SK-N-SH (cell line): ENCODE measurements at regions of chr2 and their contacts with region 1.

Region 1: GRCh38 chr2:174536304-174536703 is 49.5 kb upstream of the GPR155 start:
- DNase-seq: peak; percentile 78
- H3K4me3 ChIP-seq: no peak overlapping the region
- H3K27ac ChIP-seq: peak overlapping the region in 1 of 2 experiments; percentile 82; a peak in 2 of 4 replicates
- H3K4me1 ChIP-seq: peaks cover 0 to 22% of the 10 kb centered on the region in 2 experiments; a peak in 2 of 4 replicates
- H3K27me3 ChIP-seq: no peaks in the 10 kb centered on the region
- CTCF ChIP-seq: no peak
- EP300 ChIP-seq: peak in 1 of 2 experiments; percentile 95; a peak in 2 of 4 replicates
- RAD21 ChIP-seq: no peak; the same call in 1 of the 2 replicates

Region 2: GRCh38 chr2:174546581-174547506 is 10.5 kb after region 1 on chr2:
- CTCF ChIA-PET with region 1: interaction called, 14 read pairs
- POLR2A ChIA-PET with region 1: no interaction called
- DNase-seq: peak; percentile 47
- H3K4me3 ChIP-seq: no peak overlapping the region; a peak in 1 of 4 replicates
- H3K27ac ChIP-seq: no peak overlapping the region
- H3K4me1 ChIP-seq: no peaks in the 10 kb centered on the region; a peak in 1 of 4 replicates
- H3K27me3 ChIP-seq: no peaks in the 10 kb centered on the region
- CTCF ChIP-seq: peak; percentile 48
- EP300 ChIP-seq: no peak
- RAD21 ChIP-seq: peak; percentile 82

Region 3: DNA sequence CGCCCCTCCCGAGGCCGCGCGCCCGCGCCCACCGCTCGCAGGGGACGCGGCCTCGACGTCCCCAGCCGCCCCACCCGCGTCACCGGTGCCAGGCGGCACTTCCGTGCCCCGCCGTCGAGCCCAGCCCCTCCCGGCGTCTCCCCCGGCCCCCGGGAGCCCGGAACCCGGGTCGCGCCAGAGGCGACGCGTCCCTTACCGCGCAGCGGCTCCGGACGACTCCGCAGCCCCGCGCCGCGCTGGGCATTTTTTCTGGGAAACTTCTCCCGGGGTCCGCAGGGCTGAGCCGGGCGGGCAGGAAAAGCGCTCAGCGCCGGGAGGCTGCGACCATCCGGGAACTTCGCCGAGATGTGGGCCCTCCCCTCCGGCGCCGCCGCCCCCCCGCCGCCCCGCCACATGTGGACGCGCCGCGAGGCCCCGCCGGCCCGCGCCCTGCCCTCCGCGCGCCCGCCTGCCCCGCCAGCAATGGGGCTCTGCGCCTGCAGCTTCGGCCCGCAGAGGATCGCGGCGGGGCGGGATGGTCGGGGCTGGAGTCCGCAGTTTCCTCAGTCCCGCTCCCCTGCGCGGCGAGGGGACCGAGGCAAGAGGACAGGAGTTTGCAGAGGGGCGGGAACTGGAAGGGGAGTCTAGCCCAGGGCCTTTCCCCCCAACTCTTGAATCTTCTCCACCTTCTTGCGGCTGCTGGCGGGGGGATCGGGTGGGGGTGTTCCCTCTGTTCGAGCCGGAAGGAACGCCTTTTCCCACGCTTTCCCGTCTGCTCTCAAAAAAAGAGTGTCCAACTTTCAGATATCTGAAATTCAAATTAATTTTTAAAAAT is 146.5 kb after region 1 on chr2:
- CTCF ChIA-PET with region 1: interaction called, 7 read pairs
- POLR2A ChIA-PET with region 1: interaction called, 10 read pairs
- DNase-seq: peak; percentile 95
- H3K4me3 ChIP-seq: peak overlapping the region; percentile 89 to 93
- H3K27ac ChIP-seq: peak overlapping the region; percentile 72 to 89
- H3K4me1 ChIP-seq: peaks cover 6 to 47% of the 10 kb centered on the region in 2 experiments; a peak in 2 of 4 replicates
- H3K27me3 ChIP-seq: no peaks in the 10 kb centered on the region
- CTCF ChIP-seq: 0 out of 2 replicates have a peak, but pooled peaks have one; percentile 6
- EP300 ChIP-seq: 0 out of 4 replicates have a peak, but pooled peaks of 1 of the 2 experiments have one; percentile 11
- RAD21 ChIP-seq: no peak

Region 4: GRCh38 chr2:175010848-175011254 is 474.5 kb after region 1 on chr2:
- CTCF ChIA-PET with region 1: no interaction called
- POLR2A ChIA-PET with region 1: no interaction called
- DNase-seq: peak; percentile 37
- H3K4me3 ChIP-seq: no peak overlapping the region
- H3K27ac ChIP-seq: peak overlapping the region in 1 of 2 experiments; percentile 55; a peak in 2 of 4 replicates
- H3K4me1 ChIP-seq: peaks cover 0 to 12% of the 10 kb centered on the region in 2 experiments; a peak in 2 of 4 replicates
- H3K27me3 ChIP-seq: no peaks in the 10 kb centered on the region
- CTCF ChIP-seq: no peak
- EP300 ChIP-seq: no peak
- RAD21 ChIP-seq: no peak